CD4-positive, alpha-beta memory T cell (primary cell): ENCODE measurements at regions of chr5 and their contacts with region 1.

Region 1: GRCh38 chr5:43066799-43067741 is 27.0 kb upstream of the ANXA2R start:
- DNase-seq: peak; percentile 88 to 92 (median 90)
- H3K4me3 ChIP-seq: peak overlapping the region; percentile 97 to 99
- H3K4me3 Mint-ChIP-seq: peak overlapping the region; percentile 97 to 100 (median 98)
- H3K27ac ChIP-seq: peak overlapping the region; percentile 94
- H3K27ac Mint-ChIP-seq: peak overlapping the region; percentile 98 to 100 (median 99)
- H3K4me1 ChIP-seq: peaks cover 46% of the 10 kb centered on the region
- H3K4me1 Mint-ChIP-seq: peaks cover 31 to 59% (median 43%) of the 10 kb centered on the region in 4 donors
- H3K27me3 ChIP-seq: no peaks in the 10 kb centered on the region
- H3K27me3 Mint-ChIP-seq: no peaks in the 10 kb centered on the region

Region 2: DNA sequence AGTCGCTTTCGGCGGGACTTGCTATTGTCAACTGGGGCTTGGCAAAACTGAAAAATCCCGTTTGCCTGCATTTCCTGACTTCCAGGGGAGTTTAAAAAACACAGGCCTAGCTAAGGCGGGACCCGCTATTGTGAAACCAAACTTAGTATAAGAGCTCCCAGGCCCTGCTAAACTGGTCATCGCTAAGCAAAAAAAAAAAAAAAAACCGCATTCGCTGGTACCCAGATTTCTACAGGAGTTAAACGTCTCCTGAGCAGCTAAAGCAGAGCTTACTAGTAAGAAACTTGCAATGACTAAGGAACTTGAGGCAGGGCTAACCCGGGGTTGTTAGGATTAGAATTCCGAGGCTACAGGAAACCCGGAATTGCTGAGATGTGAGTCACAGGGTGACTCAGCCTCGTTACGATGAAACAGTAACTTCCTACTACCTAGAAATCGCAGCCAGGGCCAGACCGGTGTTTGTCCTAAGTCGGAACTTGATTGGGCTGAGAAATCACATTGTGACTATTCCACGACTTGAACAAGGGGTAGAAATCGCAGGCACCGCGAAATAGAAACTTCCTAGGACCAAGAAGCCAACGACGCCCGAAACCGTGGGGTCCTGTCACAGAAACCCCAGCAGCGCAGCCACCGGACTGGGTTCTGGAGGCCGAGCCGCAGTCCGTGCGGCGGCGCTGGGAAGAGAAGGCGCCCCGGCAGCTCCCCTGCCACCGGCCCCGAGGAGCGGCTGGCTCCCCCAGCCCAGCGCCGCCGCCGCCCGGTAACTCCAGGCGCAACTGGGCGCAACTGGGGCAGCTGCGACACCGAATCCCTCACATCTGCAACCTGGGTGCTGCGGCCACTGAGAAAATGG is 116.4 kb before region 1 on chr5:
- CTCF ChIA-PET with region 1: interaction called, 7 read pairs
- POLR2A ChIA-PET with region 1: interaction called, 168 read pairs
- intact Hi-C with region 1: loop called (anchors 1 kb)
- DNase-seq: peak; percentile 61 to 90 (median 66)
- H3K4me3 ChIP-seq: peak overlapping the region; percentile 83 to 90
- H3K4me3 Mint-ChIP-seq: peak overlapping the region; percentile 93 to 99 (median 98)
- H3K27ac ChIP-seq: peak overlapping the region; percentile 96
- H3K27ac Mint-ChIP-seq: peak overlapping the region; percentile 99 to 100 (median 100)
- H3K4me1 ChIP-seq: peaks cover 22% of the 10 kb centered on the region
- H3K4me1 Mint-ChIP-seq: peaks cover 7 to 42% (median 30%) of the 10 kb centered on the region in 4 donors
- H3K27me3 ChIP-seq: no peaks in the 10 kb centered on the region
- H3K27me3 Mint-ChIP-seq: no peaks in the 10 kb centered on the region

Region 3: DNA sequence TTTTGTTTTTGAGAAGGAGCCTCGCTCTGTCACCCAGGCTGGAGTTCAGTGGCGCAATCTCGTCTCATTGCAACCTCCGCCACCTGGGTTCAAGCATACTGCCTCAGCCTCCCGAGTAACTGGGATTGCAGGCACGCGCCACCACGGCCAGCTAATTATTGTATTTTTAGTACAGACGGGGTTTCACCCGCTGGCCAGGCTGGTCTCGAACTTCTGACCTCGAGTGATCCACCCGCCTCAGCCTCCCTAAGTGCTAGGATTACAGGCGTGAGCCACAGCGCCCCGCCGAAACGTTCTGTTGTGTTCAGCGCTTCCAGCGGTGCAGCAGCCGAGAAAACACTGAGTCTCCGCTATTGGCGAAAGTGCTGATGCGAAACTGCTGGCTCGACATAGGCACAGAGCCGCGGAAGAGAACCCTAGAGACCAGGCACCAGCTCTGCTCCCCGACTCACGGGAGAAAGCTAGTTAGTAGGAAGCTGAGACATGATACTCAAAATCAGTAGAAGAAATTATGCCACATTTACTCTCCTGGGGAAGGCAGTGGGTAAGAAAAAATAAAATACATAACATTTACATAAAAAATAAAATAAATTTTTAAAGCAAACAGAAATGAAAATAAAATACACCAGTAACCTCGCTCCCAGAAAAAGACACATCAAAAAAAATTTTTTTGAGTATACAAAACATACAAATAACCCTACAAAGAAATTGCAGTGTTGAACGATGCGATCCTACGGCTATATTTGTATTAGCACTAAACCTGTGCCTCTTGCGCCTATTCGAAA is 58.5 kb before region 1 on chr5:
- CTCF ChIA-PET with region 1: interaction called, 17 read pairs
- POLR2A ChIA-PET with region 1: interaction called, 224 read pairs
- intact Hi-C with region 1: loop called (anchors 1 kb)
- DNase-seq: peak; percentile 89 to 92 (median 90)
- H3K4me3 ChIP-seq: peak overlapping the region; percentile 66 to 84
- H3K4me3 Mint-ChIP-seq: peak overlapping the region; percentile 84 to 94 (median 91)
- H3K27ac ChIP-seq: peak overlapping the region; percentile 85
- H3K27ac Mint-ChIP-seq: peak overlapping the region; percentile 90 to 99 (median 97)
- H3K4me1 ChIP-seq: peaks cover 38% of the 10 kb centered on the region
- H3K4me1 Mint-ChIP-seq: peaks cover 19 to 48% (median 33%) of the 10 kb centered on the region in 4 donors
- H3K27me3 ChIP-seq: no peaks in the 10 kb centered on the region
- H3K27me3 Mint-ChIP-seq: no peaks in the 10 kb centered on the region

Region 4: DNA sequence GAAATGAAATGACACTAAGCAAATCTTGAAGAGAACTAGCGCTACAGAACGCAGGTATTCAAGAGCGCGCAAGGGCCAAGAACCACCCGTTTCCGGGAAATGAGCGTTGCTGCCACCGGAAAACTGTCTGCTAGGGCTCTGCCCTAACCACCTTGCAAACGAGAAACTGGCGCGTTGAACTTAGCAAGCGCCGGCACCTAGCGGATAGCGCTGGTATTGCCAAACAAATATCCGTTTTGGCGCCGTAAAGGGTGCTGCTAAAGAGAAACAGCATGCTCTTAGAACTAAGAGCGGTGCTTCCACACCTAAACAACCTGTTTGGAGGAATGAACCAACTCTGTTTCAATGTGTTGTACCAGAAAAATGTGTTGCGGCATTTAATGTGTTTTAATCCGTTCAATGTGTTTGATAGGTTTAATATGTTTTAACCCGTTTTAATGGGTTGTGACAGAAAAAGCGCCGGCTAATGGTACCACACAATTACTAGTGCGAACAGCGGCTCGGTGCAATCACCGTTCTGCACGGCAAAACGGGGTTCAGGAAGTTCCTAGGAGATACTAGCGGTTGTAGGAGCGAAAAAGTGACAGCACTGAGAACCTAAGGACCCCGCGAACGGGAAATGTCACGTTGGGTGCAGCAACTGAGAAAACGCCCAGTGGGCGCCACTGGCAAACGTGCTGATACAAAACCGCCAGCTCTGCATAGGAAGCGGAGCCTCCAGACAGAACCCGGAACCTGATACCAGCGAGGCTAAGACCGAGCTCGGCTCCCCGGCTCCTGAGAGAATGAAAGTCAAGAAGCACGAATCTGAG is 26.6 kb before region 1 on chr5 and contains the start of gene ANXA2R:
- CTCF ChIA-PET with region 1: interaction called, 80 read pairs
- POLR2A ChIA-PET with region 1: interaction called, 689 read pairs
- intact Hi-C with region 1: loop called (anchors 1 kb)
- DNase-seq: peak; percentile 94 to 97 (median 97)
- H3K4me3 ChIP-seq: peak within 1 kb of the TSS; percentile 78 to 99
- H3K4me3 Mint-ChIP-seq: peak within 1 kb of the TSS; percentile 97 to 100 (median 98)
- H3K27ac ChIP-seq: peak within 1 kb of the TSS; percentile 98
- H3K27ac Mint-ChIP-seq: peak within 1 kb of the TSS; percentile 99 to 100 (median 99)
- H3K4me1 ChIP-seq: peaks cover 50% of the 10 kb centered on the region
- H3K4me1 Mint-ChIP-seq: peaks cover 19 to 82% (median 39%) of the 10 kb centered on the region in 4 donors
- H3K27me3 ChIP-seq: no peaks in the 10 kb centered on the region
- H3K27me3 Mint-ChIP-seq: no peaks in the 10 kb centered on the region
- total RNA-seq, gene ANXA2R: 43.4 to 47.8 TPM

Region 5: DNA sequence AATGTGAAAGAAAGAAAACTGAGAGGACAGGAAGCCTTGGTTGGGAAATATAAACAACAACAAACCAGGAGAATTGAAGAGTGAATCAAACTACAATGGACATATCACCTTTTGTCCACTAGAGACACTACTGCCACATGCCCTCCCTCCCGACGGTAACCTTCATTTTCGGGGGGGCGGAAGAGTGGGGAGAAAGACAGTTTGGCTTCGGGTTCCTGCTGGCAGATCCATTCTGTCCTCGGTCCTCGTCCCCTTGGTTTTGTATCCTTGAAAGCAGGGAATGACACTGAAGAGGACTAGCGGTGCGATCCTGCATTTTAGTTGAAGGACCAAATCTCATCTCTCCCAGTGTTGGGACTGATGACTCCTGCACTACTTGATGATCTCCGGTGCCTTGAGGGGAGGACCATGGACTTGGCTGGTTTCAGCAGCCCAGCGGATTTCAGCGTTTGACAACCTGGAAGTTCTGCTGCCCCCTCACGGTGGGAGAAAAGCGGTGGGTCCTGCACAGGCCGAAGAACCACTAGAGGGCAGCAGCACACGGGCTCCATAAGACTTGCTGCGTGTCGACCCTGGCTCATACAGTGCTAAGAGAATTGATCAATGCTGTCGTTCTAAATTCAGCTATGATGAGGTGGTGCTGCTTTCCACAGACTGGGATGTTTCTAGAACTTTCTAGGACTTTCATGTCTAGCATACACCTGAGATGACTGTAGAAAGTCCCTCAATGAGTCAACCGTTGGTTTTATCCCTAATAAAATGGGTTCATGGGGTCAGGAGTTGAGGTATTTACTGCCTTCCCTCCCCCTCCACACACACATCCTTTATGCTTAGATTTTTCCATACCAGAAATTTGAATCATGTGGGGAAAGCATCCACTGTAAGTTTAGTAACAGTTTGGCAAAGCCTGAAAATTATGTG is 38.6 kb after region 1 on chr5:
- CTCF ChIA-PET with region 1: interaction called, 15 read pairs
- POLR2A ChIA-PET with region 1: interaction called, 34 read pairs
- intact Hi-C with region 1: loop called (anchors 1 kb)
- DNase-seq: peak; percentile 87 to 90 (median 88)
- H3K4me3 ChIP-seq: peak overlapping the region; percentile 62 to 87
- H3K4me3 Mint-ChIP-seq: peak overlapping the region; percentile 85 to 94 (median 88)
- H3K27ac ChIP-seq: peak overlapping the region; percentile 44
- H3K27ac Mint-ChIP-seq: peak overlapping the region; percentile 84 to 94 (median 92)
- H3K4me1 ChIP-seq: peaks cover 43% of the 10 kb centered on the region
- H3K4me1 Mint-ChIP-seq: peaks cover 28 to 45% (median 37%) of the 10 kb centered on the region in 4 donors
- H3K27me3 ChIP-seq: no peaks in the 10 kb centered on the region
- H3K27me3 Mint-ChIP-seq: no peaks in the 10 kb centered on the region

Region 6: GRCh38 chr5:43556857-43557542 is 489.9 kb after region 1 on chr5 and contains the start of gene PAIP1:
- CTCF ChIA-PET with region 1: no interaction called
- POLR2A ChIA-PET with region 1: no interaction called
- intact Hi-C with region 1: loop called (anchors 5 kb)
- DNase-seq: peak; percentile 86 to 91 (median 88)
- H3K4me3 ChIP-seq: peak within 1 kb of the TSS; percentile 79 to 84
- H3K4me3 Mint-ChIP-seq: peak within 1 kb of the TSS; percentile 91 to 98 (median 94)
- H3K27ac ChIP-seq: peak within 1 kb of the TSS; percentile 84
- H3K27ac Mint-ChIP-seq: peak within 1 kb of the TSS; percentile 93 to 99 (median 97)
- H3K4me1 ChIP-seq: peaks cover 41% of the 10 kb centered on the region
- H3K4me1 Mint-ChIP-seq: peaks cover 7 to 13% (median 10%) of the 10 kb centered on the region in 4 donors
- H3K27me3 ChIP-seq: no peaks in the 10 kb centered on the region
- H3K27me3 Mint-ChIP-seq: no peaks in the 10 kb centered on the region
- total RNA-seq, gene PAIP1: 36.0 to 38.0 TPM